ENCODE measurements at regions of chr3 and their contacts with region 1.

Region 1: GRCh38 chr3:192816351-192816750 is 89.0 kb upstream of the FGF12 start:
- DNase-seq: peak; percentile 68
- H3K4me3 ChIP-seq: no peak overlapping the region
- H3K27ac ChIP-seq: no peak overlapping the region
- H3K4me1 ChIP-seq: peaks cover 29% of the 10 kb centered on the region
- H3K27me3 ChIP-seq: no peaks in the 10 kb centered on the region
- CTCF ChIP-seq: peak; percentile 38 to 51
- POLR2A ChIP-seq: no peak

Region 2: DNA sequence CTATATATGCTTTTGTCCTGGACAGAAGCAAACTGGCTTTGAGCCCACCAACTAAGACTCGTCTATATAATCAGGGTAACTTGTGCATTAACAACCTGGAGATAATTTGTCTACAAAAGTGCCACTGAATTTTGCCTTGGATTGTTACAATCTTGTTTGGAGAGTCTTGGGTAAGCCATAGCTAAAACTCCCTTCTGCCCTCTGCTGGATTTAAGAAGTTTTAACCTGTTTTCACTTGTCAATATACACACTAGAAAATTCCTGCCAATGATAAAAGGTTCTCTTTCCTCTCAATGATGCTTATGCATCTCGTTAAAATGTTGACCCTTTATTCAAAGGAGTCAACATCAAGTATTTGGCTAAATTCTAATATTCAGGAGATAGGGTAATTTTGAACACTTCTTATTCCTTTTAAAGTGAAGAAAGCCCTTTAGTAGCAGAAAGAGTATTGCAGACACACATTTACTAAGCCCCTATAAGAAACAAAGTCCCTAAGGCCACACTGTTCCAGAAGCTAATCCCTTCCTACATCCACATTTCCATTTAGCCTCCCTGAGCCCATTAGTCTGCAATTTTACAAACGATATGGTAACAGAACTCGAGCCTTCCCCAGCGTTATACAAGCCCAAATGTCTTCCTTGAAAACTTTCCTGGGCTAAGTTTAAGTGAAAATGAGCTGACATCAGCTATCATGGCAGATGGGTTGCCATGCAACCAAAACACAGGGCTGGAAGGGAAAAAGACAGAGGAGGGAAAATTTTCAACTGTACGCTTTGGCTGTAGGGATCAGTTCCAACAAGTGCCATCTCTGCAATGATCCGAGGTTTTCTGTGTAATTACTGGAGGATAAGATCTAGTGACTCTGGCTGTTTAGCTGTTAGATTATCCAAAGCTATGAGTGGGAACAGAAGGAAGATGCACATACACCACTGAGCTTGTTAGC is 13.1 kb before region 1 on chr3:
- CTCF ChIA-PET with region 1: interaction called, 27 read pairs
- POLR2A ChIA-PET with region 1: no interaction called
- dilution Hi-C with region 1: no loop called
- intact Hi-C with region 1: no loop called
- DNase-seq: peak; percentile 49
- H3K4me3 ChIP-seq: no peak overlapping the region
- H3K27ac ChIP-seq: no peak overlapping the region
- H3K4me1 ChIP-seq: no peaks in the 10 kb centered on the region
- H3K27me3 ChIP-seq: no peaks in the 10 kb centered on the region
- CTCF ChIP-seq: peak; percentile 29 to 51
- POLR2A ChIP-seq: no peak

Region 3: GRCh38 chr3:192899540-192899982 is 83.2 kb after region 1 on chr3:
- CTCF ChIA-PET with region 1: no interaction called
- POLR2A ChIA-PET with region 1: no interaction called
- dilution Hi-C with region 1: no loop called
- intact Hi-C with region 1: no loop called
- DNase-seq: no peak
- H3K4me3 ChIP-seq: no peak overlapping the region
- H3K27ac ChIP-seq: peak overlapping the region; percentile 4
- H3K4me1 ChIP-seq: peaks cover 11% of the 10 kb centered on the region
- H3K27me3 ChIP-seq: no peaks in the 10 kb centered on the region
- CTCF ChIP-seq: no peak
- POLR2A ChIP-seq: no peak

Region 4: GRCh38 chr3:192917404-192918274 is 101.3 kb after region 1 on chr3 and contains the start of gene MB21D2:
- CTCF ChIA-PET with region 1: interaction called, 76 read pairs
- POLR2A ChIA-PET with region 1: interaction called, 8 read pairs
- dilution Hi-C with region 1: no loop called
- intact Hi-C with region 1: loop called (anchors 1 kb)
- DNase-seq: peak; percentile 89
- H3K4me3 ChIP-seq: peak within 1 kb of the TSS; percentile 50 to 89 (median 60)
- H3K27ac ChIP-seq: peak within 1 kb of the TSS; percentile 80
- H3K4me1 ChIP-seq: peaks cover 9% of the 10 kb centered on the region
- H3K27me3 ChIP-seq: no peaks in the 10 kb centered on the region
- CTCF ChIP-seq: no peak
- POLR2A ChIP-seq: peak; percentile 66
- total RNA-seq, gene MB21D2: 7.2 and 7.4 TPM in 2 replicates

Region 5: DNA sequence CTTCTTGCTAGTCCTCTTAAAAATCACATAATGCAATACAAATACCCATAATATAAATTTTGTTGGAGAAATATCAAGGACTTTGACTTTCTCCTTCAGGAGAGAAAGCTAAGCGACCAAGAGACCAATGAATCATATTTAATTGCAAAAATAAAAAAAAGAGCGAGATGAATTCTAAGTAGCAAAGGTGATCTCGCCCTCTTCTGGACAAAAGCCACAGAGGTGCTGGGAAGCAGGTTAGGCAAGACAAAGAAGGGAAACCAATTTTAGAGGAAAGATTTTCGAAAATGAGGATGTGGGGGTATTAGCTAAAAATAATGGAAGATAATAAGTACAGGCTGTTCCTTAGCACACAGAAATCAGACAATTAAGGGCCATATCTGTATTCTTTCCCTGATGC is 313.2 kb after region 1 on chr3:
- CTCF ChIA-PET with region 1: interaction called, 10 read pairs
- POLR2A ChIA-PET with region 1: no interaction called
- dilution Hi-C with region 1: no loop called
- intact Hi-C with region 1: loop called (anchors 5 kb)
- DNase-seq: no peak
- H3K4me3 ChIP-seq: no peak overlapping the region
- H3K27ac ChIP-seq: no peak overlapping the region
- H3K4me1 ChIP-seq: no peaks in the 10 kb centered on the region
- H3K27me3 ChIP-seq: no peaks in the 10 kb centered on the region
- CTCF ChIP-seq: no peak
- POLR2A ChIP-seq: no peak

Region 6: DNA sequence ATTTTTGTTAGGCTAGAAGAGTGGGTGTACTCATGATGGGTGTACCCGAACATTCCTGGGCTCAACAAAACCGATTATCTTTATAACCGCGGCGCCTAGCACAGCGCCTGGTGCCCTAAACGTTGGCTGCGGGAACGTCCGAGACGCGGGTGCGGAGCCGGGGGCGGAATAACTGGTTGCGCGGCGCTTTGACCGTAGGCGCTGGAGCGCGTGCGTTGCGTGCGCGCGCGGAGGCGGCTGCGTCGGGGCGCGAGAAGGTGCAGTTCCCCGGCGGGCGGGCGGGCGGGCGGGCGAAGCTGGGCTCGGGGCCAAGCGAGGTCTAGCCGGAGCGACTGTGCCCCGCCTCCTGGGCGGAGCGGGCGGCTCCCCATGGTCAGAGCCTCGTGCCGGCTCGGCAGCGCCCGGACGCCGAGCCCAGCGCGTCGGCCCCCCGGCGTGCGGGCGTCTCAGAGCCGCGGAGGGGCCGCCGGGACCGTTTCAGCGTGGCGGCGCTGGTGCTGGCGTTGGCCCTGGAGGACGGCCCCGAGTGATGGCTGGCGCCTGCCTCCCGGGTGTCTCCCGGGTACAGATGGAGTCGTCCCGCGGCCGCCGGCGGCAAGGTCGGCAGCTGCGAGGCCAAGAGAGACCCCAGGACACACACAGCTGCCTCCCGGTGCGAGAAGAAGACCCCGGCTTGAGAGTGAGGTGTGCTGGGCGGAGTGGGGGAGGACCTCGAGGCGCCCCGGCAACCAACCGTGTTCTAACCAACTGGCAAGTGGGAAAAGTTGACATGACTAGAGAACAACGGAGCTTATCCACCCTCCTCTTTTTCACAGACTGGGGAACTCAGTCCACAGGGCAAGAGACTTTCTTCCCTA is 424.7 kb after region 1 on chr3 and contains the start of gene PLAAT1:
- CTCF ChIA-PET with region 1: interaction called, 8 read pairs
- POLR2A ChIA-PET with region 1: no interaction called
- dilution Hi-C with region 1: no loop called
- intact Hi-C with region 1: loop called (anchors 5 kb)
- DNase-seq: peak; percentile 62
- H3K4me3 ChIP-seq: peak within 1 kb of the TSS in 2 of 3 experiments; percentile 52 to 66
- H3K27ac ChIP-seq: no peak within 1 kb of the TSS
- H3K4me1 ChIP-seq: peaks cover 5% of the 10 kb centered on the region
- H3K27me3 ChIP-seq: peaks cover 3 to 15% of the 10 kb centered on the region in 2 experiments
- CTCF ChIP-seq: no peak
- POLR2A ChIP-seq: no peak
- total RNA-seq, gene PLAAT1: 0.58 and 0.75 TPM in 2 replicates

Region 7: DNA sequence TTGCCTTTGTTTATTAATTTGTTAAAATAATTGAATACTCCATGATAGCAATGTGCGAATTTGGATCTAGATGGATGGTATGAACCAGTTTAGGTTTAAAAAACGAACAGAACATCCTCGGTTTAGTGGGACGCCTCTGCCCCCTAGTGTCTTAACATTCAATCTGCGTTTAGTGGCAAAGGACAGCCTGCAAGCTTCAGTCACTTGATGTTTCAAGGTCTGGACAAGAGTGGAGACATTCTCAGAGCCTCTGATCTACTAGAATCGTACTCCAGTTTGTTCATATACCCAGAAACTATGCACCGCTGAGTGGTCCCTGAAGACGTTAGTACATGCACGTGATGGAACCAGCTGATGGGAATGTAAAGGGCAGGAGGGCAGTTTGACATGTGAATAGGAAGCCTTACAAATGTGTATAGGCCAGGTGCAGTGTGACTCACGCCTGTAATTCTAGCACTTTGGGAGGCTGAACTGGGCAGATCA is 756.1 kb after region 1 on chr3:
- CTCF ChIA-PET with region 1: interaction called, 188 read pairs
- POLR2A ChIA-PET with region 1: no interaction called
- dilution Hi-C with region 1: no loop called
- intact Hi-C with region 1: loop called (anchors 1 kb)
- DNase-seq: peak; percentile 69
- H3K4me3 ChIP-seq: no peak overlapping the region
- H3K27ac ChIP-seq: no peak overlapping the region
- H3K4me1 ChIP-seq: no peaks in the 10 kb centered on the region
- H3K27me3 ChIP-seq: peaks cover 1 to 3% of the 10 kb centered on the region in 2 experiments
- CTCF ChIP-seq: peak; percentile 76 to 77
- POLR2A ChIP-seq: no peak

Measured in endothelial cell of umbilical vein (primary cell).